Motor neuron (in vitro differentiated cells): ENCODE measurements at regions of chr10 and their contacts with region 1.

Region 1: GRCh38 chr10:35126530-35127296 is at the start of gene CREM:
- ATAC-seq: peak; percentile 84 to 91 (median 86)
- H3K4me3 ChIP-seq: peak within 1 kb of the TSS; percentile 45 to 74 (median 60)
- H3K27ac ChIP-seq: peak within 1 kb of the TSS; percentile 92 to 95
- H3K4me1 ChIP-seq: peaks cover 7 to 14% of the 10 kb centered on the region in 2 donors
- total RNA-seq, gene CREM: 19.1 to 123 (median 26.4) TPM

Region 2: DNA sequence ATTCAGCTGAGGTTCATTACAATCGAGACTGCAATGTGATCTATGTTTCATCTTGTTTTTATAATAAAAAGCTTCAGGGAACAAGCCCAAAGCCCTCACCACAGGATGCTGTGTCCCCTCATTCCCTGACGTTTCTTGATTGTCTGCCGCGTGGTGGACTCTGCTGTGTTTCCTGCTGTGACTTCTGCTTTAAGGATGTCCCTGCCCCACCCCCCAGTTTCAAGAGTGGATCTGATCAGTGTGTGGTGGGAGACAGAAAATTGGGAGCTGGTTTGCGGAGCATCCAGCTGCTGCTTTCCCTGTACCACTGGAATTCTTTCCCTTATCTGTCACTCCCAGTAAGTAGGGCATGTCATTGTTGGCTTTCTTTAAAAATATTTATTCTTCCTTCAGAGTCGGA is 86.1 kb after region 1 on chr10:
- in situ Hi-C with region 1: loop called in 4 of 9 experiments (anchors 5 to 25 kb)
- ATAC-seq: no peak
- H3K4me3 ChIP-seq: no peak overlapping the region
- H3K27ac ChIP-seq: no peak overlapping the region
- H3K4me1 ChIP-seq: peaks cover 0 to 3% of the 10 kb centered on the region in 2 donors

Region 3: DNA sequence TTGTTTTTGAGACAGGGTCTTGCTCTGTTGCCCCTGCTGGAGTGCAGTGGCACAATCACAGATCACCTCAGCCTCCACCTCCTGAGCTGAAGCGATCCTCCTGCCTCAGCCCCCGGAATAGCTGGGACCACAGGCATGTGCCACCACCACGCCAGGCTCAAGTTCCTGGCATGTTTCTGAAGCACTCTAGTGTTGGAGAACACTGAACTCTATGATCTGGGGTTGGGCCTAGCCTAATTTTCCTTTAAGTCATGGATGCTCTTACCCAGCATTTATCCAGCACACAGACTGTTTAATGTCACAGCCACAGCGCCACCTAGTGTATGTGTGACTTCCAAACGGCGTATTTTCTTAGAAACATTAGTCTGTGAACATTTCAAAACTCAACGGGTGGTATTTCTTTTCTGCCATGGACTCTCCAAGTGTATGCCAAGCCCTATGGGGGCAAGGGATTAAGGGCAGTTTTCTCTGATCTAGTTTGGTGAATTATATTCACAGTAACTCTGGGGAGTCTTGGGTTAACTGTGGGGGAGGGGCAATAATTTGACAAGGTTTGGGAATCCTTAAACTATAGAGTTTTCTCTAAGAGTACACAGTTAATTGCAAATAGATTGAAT is 91.7 kb after region 1 on chr10:
- in situ Hi-C with region 1: loop called in 4 of 9 experiments (anchors 5 to 25 kb)
- ATAC-seq: peak; percentile 41 to 85 (median 64)
- H3K4me3 ChIP-seq: no peak overlapping the region
- H3K27ac ChIP-seq: no peak overlapping the region
- H3K4me1 ChIP-seq: peaks cover 0 to 9% of the 10 kb centered on the region in 2 donors